Cardiac septum (tissue), 1 donor: ENCODE measurements at regions of chr2 and their contacts with region 1.

Region 1: DNA sequence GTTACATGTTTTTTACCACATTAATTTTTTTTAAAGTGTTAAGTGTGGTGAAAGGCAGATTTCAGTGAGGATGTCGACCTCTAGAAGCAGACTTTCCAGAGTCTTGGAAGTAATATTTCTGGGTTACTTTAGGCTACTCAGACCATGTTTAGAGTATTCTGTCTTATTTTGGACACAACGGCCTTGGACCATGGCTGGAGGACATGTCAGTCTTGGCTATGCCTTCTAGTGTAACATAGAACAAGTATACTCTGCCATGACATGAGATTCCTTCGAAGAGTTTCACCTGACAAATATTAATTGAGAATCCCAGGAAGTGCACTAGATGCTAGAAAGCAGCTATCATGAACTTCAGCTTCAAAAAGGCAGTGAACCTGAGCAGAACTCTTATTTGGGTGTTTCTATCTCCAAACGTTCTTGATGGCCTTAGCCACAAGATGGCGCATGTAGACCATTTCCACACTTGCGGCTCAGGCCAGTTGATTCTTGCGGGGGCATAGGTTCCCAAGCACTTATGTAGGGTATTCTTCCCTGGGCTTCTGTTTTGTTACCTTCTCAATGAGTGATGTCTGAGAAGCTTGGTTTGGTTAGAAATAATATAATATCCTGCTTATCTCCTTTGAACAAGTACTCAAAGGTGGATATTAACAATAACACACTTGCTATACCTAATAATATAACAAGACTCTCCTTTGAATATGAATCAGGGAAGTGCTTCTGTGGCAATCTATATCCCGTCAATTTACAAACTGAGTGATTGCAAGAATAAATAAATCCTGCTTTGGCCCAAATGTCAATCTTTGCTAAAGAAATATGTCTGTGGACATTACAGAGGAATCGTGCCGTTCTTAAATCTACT is 62.0 kb downstream of the CACNB4 start:
- DNase-seq: no peak

Region 2: GRCh38 chr2:151922845-151923666 is 113.8 kb before region 1 on chr2:
- intact Hi-C with region 1: no loop called
- DNase-seq: peak; percentile 90

Region 3: GRCh38 chr2:152097801-152098495 is 61.1 kb after region 1 on chr2:
- intact Hi-C with region 1: loop called (anchors 5 kb)
- DNase-seq: no peak

Region 4: GRCh38 chr2:152175458-152176325 is 138.9 kb after region 1 on chr2 and contains the start of gene STAM2:
- intact Hi-C with region 1: loop called (anchors 2 kb)
- DNase-seq: peak; percentile 98
- total RNA-seq, gene STAM2: 28.9 TPM

Region 5: GRCh38 chr2:152635635-152636298 is 598.9 kb after region 1 on chr2:
- intact Hi-C with region 1: loop called (anchors 5 kb)
- DNase-seq: peak; percentile 82